A549 (cell line): ENCODE measurements at regions of chr11 and their contacts with region 1.

Region 1: GRCh38 chr11:86608251-86608799 is 64.1 kb downstream of the ME3 start:
- DNase-seq: peak; percentile 47 to 84
- ATAC-seq: peak; percentile 82 to 87
- H3K4me3 ChIP-seq: no peak overlapping the region
- H3K27ac ChIP-seq: peak overlapping the region; percentile 61 to 77
- H3K4me1 ChIP-seq: peaks cover 37% of the 10 kb centered on the region
- CTCF ChIP-seq: peak; percentile 99
- EP300 ChIP-seq: no peak; a peak in 1 of 5 replicates
- POLR2A ChIP-seq: no peak
- RAD21 ChIP-seq: peak; percentile 79 to 95

Region 2: GRCh38 chr11:86456052-86456939 is 152.0 kb before region 1 on chr11:
- CTCF ChIA-PET with region 1: interaction called, 42 read pairs
- POLR2A ChIA-PET with region 1: no interaction called
- DNase-seq: peak; percentile 79 to 84
- ATAC-seq: peak; percentile 82 to 93
- H3K4me3 ChIP-seq: no peak overlapping the region
- H3K27ac ChIP-seq: peak overlapping the region; percentile 68 to 85
- H3K4me1 ChIP-seq: peaks cover 43% of the 10 kb centered on the region
- CTCF ChIP-seq: peak; percentile 97
- EP300 ChIP-seq: no peak
- POLR2A ChIP-seq: no peak
- RAD21 ChIP-seq: peak; percentile 99

Region 3: DNA sequence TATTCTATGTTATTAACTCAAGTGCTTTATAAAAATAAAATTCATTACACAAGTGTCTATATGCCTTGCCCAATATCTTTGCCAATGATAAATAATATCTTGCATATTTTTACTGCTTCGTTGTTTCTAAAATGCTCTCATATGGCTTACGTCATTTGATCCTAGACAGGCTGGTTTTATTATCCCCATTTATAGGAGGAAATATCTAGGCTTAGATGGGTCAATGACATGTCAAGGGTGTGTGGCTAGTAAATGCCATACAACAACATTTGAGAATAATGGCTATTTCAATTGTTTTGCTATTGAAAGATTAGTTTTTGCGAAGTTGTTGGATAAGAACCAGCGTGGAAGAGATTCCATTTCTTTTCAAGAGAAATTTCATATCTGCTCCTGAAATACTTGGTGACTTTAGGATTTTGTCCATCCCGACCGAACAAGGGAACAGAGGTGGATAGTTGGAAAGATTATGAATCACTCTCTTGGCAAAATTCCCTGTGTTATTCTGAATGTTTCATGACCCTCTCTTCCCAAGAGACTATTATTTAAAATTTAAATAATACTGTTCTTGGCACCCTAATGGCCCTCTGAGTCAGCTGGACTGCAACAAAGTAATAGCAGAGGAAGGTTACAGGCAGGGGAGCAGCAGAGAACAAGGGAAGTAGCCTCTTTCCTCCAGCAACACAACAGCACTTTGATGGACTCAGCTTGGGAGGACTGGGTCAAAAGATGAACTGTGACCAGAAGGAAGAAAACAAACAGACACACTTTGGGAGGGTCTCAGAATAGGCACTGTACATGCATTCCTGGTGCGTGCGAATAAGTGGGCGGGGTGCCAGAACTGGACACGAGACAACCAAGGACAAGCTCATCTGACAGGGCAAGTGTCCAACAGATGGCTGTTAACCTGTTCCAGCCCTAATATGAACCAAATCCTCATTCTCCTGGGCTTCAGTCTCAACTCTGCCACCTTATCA is 30.4 kb before region 1 on chr11:
- CTCF ChIA-PET with region 1: interaction called, 12 read pairs
- POLR2A ChIA-PET with region 1: no interaction called
- DNase-seq: peak; percentile 63 to 86
- ATAC-seq: peak; percentile 80 to 89
- H3K4me3 ChIP-seq: 0 out of 3 replicates have a peak overlapping the region, but pooled peaks have one; percentile 8
- H3K27ac ChIP-seq: peak overlapping the region; percentile 83 to 84
- H3K4me1 ChIP-seq: peaks cover 89% of the 10 kb centered on the region
- CTCF ChIP-seq: no peak
- EP300 ChIP-seq: no peak; a peak in 1 of 5 replicates
- POLR2A ChIP-seq: no peak
- RAD21 ChIP-seq: peak; percentile 2 to 26; a peak in 1 of 5 replicates

Region 4: GRCh38 chr11:86620891-86621521 is 12.7 kb after region 1 on chr11:
- CTCF ChIA-PET with region 1: interaction called, 65 read pairs
- POLR2A ChIA-PET with region 1: no interaction called
- DNase-seq: no peak
- ATAC-seq: no peak
- H3K4me3 ChIP-seq: no peak overlapping the region
- H3K27ac ChIP-seq: peak overlapping the region in 1 of 2 experiments; percentile 24; a peak in 2 of 6 replicates
- H3K4me1 ChIP-seq: 0 out of 3 replicates have a peak, but pooled peaks cover 5% of the 10 kb centered on the region
- CTCF ChIP-seq: no peak
- EP300 ChIP-seq: no peak
- POLR2A ChIP-seq: no peak
- RAD21 ChIP-seq: no peak

Region 5: GRCh38 chr11:86688398-86689179 is 80.3 kb after region 1 on chr11:
- CTCF ChIA-PET with region 1: interaction called, 10 read pairs
- POLR2A ChIA-PET with region 1: no interaction called
- DNase-seq: peak in 1 of 2 experiments; percentile 36
- ATAC-seq: peak in 1 of 2 experiments; percentile 68; a peak in 3 of 6 replicates
- H3K4me3 ChIP-seq: no peak overlapping the region
- H3K27ac ChIP-seq: peak overlapping the region in 1 of 2 experiments; percentile 59; a peak in 4 of 6 replicates
- H3K4me1 ChIP-seq: peaks cover 22% of the 10 kb centered on the region
- CTCF ChIP-seq: no peak
- EP300 ChIP-seq: no peak
- POLR2A ChIP-seq: no peak
- RAD21 ChIP-seq: no peak

Region 6: GRCh38 chr11:86811637-86812321 is 203.5 kb after region 1 on chr11:
- CTCF ChIA-PET with region 1: interaction called, 27 read pairs
- POLR2A ChIA-PET with region 1: no interaction called
- DNase-seq: peak; percentile 73 to 84
- ATAC-seq: peak; percentile 80
- H3K4me3 ChIP-seq: no peak overlapping the region
- H3K27ac ChIP-seq: peak overlapping the region; percentile 81 to 86
- H3K4me1 ChIP-seq: peaks cover 93% of the 10 kb centered on the region
- CTCF ChIP-seq: no peak
- EP300 ChIP-seq: peak in 1 of 2 experiments; percentile 66; a peak in 3 of 5 replicates
- POLR2A ChIP-seq: no peak
- RAD21 ChIP-seq: no peak